Activated naive CD4-positive, alpha-beta T cell treated with anti-CD3 and anti-CD28 coated beads for 36 hours (primary cell): ENCODE measurements at regions of chr7 and their contacts with region 1.

Region 1: DNA sequence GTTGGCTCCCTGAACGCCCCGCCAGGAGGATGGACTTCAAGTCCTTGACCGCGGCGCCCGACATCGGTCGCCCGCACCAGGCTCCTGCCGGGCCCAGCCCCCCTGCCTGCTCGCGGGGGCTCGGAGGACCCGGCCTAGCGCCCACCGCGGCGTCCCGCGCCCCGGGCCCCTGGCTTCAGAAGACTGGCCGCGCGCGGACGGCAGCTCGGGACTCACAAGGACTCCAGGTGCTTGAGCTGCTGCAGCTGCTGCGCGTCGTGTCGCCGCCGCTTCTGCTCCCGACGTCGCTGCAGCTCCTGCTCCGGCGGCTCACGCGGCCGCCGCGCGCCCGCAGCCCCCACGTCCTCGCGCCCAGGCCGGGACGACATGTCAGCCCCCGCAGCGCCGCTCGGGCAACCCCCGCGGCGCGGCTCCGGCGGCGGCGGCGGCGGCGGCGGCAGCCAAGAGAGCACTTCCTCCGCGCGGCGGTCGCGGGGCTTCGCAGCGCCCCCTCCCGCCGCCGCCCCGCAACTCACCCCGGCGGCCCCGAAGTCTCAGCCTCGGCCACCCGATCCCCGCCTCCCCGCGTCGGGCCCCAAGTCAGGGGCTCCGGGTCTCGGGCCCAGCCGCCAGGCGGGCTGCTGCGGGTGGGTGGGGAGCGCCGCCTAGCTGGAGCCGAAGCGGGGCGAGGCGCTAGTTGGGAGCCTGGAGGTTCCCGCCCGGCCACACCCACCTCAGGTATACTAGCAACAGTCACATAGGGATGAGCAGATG is at the start of gene RP9:
- DNase-seq: peak; percentile 73
- H3K4me3 Mint-ChIP-seq: peak within 1 kb of the TSS; percentile 88
- H3K27ac Mint-ChIP-seq: peak within 1 kb of the TSS; percentile 56
- H3K4me1 Mint-ChIP-seq: peaks cover 37% of the 10 kb centered on the region
- H3K27me3 Mint-ChIP-seq: no peaks in the 10 kb centered on the region
- total RNA-seq, gene RP9: 14.2 to 17.6 TPM

Region 2: DNA sequence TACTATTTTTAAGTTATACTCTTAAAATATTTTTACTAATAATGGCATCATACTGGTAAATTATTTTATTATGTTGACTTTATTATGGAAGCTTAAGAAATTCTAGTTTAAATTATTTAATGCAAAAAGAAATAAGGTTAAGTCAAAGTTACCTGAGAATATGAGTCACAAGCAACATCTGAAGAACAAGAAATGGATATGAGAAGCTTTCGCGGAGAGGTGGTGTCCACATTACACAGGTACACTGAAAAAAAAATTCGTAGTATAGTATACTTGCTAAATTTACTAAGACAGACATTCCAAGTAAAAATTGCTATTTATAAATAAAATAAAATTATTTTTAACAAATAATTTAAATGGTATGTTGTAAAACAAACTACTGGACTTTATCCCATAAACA is 470.1 kb before region 1 on chr7:
- CTCF ChIA-PET with region 1: no interaction called
- intact Hi-C with region 1: no loop called
- DNase-seq: no peak
- H3K4me3 Mint-ChIP-seq: no peak overlapping the region
- H3K27ac Mint-ChIP-seq: no peak overlapping the region
- H3K4me1 Mint-ChIP-seq: peaks cover 7% of the 10 kb centered on the region
- H3K27me3 Mint-ChIP-seq: peaks cover 5% of the 10 kb centered on the region

Region 3: GRCh38 chr7:32694182-32694581 is 415.0 kb before region 1 on chr7:
- CTCF ChIA-PET with region 1: no interaction called
- intact Hi-C with region 1: loop called (anchors 2 kb)
- DNase-seq: no peak
- H3K4me3 Mint-ChIP-seq: no peak overlapping the region
- H3K27ac Mint-ChIP-seq: no peak overlapping the region
- H3K4me1 Mint-ChIP-seq: peaks cover 8% of the 10 kb centered on the region
- H3K27me3 Mint-ChIP-seq: peaks cover 2% of the 10 kb centered on the region

Region 4: DNA sequence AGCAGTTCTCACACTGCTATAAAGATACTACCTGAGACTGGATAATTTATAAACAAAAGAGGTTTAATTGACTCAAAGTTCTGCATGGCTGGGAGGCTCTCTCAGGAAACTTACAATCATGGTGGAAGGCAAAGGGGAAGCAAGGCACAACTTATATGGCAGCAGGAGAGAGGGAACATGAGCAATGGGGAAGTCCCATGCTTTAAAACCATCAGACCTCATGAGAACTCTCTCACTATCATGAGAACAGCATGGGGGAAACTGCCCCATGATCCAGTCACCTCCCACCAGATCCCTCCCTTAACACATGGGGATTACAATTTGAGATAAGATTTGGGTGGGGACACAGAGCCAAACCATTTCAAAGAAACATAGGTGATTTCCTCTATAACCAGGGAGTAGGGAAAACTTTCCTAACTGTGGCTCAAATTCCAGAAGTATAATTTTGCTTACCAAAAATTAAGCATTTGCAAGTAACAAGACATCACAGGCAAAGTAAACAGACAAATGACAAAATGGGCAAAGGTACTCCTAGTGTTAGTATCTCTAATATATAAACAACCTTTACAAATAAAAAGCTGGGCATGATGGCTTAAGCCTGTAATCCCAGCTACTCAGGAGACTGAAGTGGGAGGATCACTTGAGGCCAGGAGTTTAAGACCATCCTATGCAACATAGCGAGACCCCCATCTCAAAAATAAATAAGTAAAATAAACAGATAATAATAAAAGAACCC is 305.6 kb before region 1 on chr7:
- CTCF ChIA-PET with region 1: interaction called, 6 read pairs
- intact Hi-C with region 1: loop called (anchors 1 kb)
- DNase-seq: no peak
- H3K4me3 Mint-ChIP-seq: no peak overlapping the region
- H3K27ac Mint-ChIP-seq: no peak overlapping the region
- H3K4me1 Mint-ChIP-seq: no peaks in the 10 kb centered on the region
- H3K27me3 Mint-ChIP-seq: no peaks in the 10 kb centered on the region

Region 5: DNA sequence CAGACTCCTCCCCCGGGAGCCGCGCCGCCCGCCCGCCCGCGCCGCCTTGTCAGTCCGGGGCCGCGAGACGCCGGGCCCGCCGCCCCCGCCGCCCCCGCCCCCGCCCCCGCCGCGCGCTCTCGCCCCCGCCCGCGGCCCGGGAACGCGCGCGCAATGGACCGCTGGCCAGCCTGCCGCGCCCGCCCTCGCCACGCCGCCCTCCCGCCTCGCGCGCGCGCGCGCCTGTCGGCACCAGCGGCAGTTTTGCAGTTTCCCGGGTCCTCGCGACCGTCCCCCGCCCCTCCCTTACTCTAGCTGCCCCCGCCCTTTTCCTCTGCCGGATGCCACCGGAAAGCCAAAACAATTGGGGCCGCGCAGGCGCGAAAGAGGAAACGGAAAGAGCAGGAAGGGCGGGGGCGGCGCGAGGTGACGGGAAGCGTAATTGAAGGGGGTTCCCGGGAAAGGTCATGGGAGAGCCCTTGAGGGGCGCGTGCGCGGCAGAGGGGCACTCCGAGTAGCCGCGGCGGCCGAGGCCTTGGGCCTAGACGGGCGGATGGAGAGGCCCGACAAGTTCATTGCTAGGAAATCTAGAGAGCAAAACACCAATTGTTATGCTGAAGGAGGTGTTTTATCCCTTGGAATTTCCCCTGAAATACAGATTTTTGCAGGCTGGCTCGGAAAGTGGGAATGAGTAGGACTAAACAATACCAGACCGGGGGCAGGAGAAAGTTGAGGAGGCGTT is 217.2 kb before region 1 on chr7:
- CTCF ChIA-PET with region 1: interaction called, 6 read pairs
- intact Hi-C with region 1: loop called (anchors 1 kb)
- DNase-seq: peak; percentile 99
- H3K4me3 Mint-ChIP-seq: peak overlapping the region; percentile 89
- H3K27ac Mint-ChIP-seq: peak overlapping the region; percentile 99
- H3K4me1 Mint-ChIP-seq: peaks cover 47% of the 10 kb centered on the region
- H3K27me3 Mint-ChIP-seq: no peaks in the 10 kb centered on the region

Region 6: GRCh38 chr7:33040803-33041516 is 68.2 kb before region 1 on chr7:
- CTCF ChIA-PET with region 1: interaction called, 17 read pairs
- intact Hi-C with region 1: loop called (anchors 1 kb)
- DNase-seq: peak; percentile 84
- H3K4me3 Mint-ChIP-seq: peak overlapping the region; percentile 69
- H3K27ac Mint-ChIP-seq: peak overlapping the region; percentile 86
- H3K4me1 Mint-ChIP-seq: peaks cover 47% of the 10 kb centered on the region
- H3K27me3 Mint-ChIP-seq: no peaks in the 10 kb centered on the region

Region 7: DNA sequence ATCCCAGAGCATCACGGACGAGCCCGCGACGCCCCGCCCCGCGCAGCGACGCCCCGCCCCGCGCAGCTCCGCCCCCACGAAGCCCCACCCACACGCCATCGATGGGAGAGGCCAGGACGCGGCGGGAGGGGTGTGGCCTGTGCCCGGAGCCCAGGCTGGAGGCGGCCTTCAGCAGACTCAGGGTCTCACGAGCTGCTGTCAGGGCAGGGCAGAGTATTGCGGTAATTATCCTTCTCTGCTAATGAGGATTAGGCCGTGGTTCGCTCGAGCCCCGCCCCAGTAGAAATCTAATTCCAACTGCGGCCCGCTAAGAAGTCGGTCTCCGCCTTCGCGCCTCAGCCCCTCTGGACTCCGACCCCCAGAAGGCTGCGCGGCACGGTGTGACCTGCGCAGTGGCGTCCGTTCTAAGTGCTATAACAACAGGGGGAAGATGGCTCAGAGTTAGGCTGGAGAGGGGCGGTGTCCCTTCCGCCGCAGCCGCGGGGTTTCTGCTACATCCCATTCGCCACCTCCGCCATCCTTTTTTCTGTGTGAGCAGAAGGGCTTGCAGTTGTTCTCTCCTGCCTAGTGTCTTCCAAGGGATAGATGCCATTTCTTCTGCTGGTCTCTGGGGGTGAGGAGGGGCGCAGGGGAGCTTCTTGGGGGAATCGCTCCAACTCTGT is 46.3 kb before region 1 on chr7:
- CTCF ChIA-PET with region 1: interaction called, 14 read pairs
- intact Hi-C with region 1: loop called (anchors 1 kb)
- DNase-seq: peak; percentile 93
- H3K4me3 Mint-ChIP-seq: peak overlapping the region; percentile 92
- H3K27ac Mint-ChIP-seq: peak overlapping the region; percentile 88
- H3K4me1 Mint-ChIP-seq: peaks cover 30% of the 10 kb centered on the region
- H3K27me3 Mint-ChIP-seq: no peaks in the 10 kb centered on the region

Region 8: GRCh38 chr7:33128990-33129805 is 20.0 kb after region 1 on chr7 and contains the start of gene BBS9:
- CTCF ChIA-PET with region 1: interaction called, 5 read pairs
- intact Hi-C with region 1: loop called (anchors 1 kb)
- DNase-seq: peak; percentile 95
- H3K4me3 Mint-ChIP-seq: peak within 1 kb of the TSS; percentile 93
- H3K27ac Mint-ChIP-seq: peak within 1 kb of the TSS; percentile 72
- H3K4me1 Mint-ChIP-seq: peaks cover 21% of the 10 kb centered on the region
- H3K27me3 Mint-ChIP-seq: no peaks in the 10 kb centered on the region
- total RNA-seq, gene BBS9: 7.0 to 7.4 TPM

Region 9: GRCh38 chr7:33334349-33334748 is 225.2 kb after region 1 on chr7:
- CTCF ChIA-PET with region 1: no interaction called
- intact Hi-C with region 1: no loop called
- DNase-seq: no peak
- H3K4me3 Mint-ChIP-seq: no peak overlapping the region
- H3K27ac Mint-ChIP-seq: no peak overlapping the region
- H3K4me1 Mint-ChIP-seq: no peaks in the 10 kb centered on the region
- H3K27me3 Mint-ChIP-seq: no peaks in the 10 kb centered on the region